Activated CD8-positive, alpha-beta T cell treated with anti-CD3 and anti-CD28 coated beads for 36 hours (primary cell): ENCODE measurements at regions of chr17 and their contacts with region 1.

Region 1: DNA sequence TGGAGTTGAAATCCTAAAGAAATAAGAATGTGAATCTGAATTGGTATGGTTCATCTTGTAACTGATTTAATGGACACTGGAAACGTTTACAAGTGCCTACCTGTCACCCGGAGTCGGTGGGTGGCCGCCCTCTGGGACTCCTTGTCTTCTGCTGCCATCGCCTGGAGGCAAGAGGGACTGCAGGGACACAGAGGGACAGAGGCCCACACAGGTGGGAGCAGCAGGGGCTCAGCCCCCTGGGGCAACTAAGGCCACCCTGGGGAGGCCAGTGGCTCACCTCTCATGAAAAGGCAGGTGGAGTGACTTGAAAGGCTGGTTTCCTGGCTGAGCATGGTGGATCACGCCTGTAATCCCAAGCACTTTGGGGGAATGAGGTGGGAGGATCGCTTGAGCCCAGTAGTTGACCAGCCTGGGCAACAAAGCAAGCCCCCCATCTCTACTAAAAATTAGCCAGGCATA is 23.2 kb downstream of the TMEM92 start:
- DNase-seq: peak; percentile 87
- ATAC-seq: peak; percentile 100
- H3K4me3 Mint-ChIP-seq: no peak overlapping the region
- H3K27ac Mint-ChIP-seq: no peak overlapping the region
- H3K4me1 Mint-ChIP-seq: no peaks in the 10 kb centered on the region
- H3K27me3 Mint-ChIP-seq: peaks cover 2% of the 10 kb centered on the region
- CTCF ChIP-seq: peak; percentile 98

Region 2: GRCh38 chr17:50213026-50214022 is 84.1 kb before region 1 on chr17:
- CTCF ChIA-PET with region 1: interaction called, 20 read pairs
- POLR2A ChIA-PET with region 1: interaction called, 3 read pairs
- intact Hi-C with region 1: no loop called
- DNase-seq: peak; percentile 88
- ATAC-seq: peak; percentile 99
- H3K4me3 Mint-ChIP-seq: no peak overlapping the region
- H3K27ac Mint-ChIP-seq: no peak overlapping the region
- H3K4me1 Mint-ChIP-seq: peaks cover 22% of the 10 kb centered on the region
- H3K27me3 Mint-ChIP-seq: peaks cover 25% of the 10 kb centered on the region
- CTCF ChIP-seq: no peak

Region 3: GRCh38 chr17:50269477-50270434 is 27.7 kb before region 1 on chr17:
- CTCF ChIA-PET with region 1: interaction called, 46 read pairs
- POLR2A ChIA-PET with region 1: interaction called, 3 read pairs
- intact Hi-C with region 1: no loop called
- DNase-seq: peak; percentile 88
- ATAC-seq: peak; percentile 94
- H3K4me3 Mint-ChIP-seq: no peak overlapping the region
- H3K27ac Mint-ChIP-seq: no peak overlapping the region
- H3K4me1 Mint-ChIP-seq: peaks cover 9% of the 10 kb centered on the region
- H3K27me3 Mint-ChIP-seq: peaks cover 11% of the 10 kb centered on the region
- CTCF ChIP-seq: peak; percentile 73

Region 4: DNA sequence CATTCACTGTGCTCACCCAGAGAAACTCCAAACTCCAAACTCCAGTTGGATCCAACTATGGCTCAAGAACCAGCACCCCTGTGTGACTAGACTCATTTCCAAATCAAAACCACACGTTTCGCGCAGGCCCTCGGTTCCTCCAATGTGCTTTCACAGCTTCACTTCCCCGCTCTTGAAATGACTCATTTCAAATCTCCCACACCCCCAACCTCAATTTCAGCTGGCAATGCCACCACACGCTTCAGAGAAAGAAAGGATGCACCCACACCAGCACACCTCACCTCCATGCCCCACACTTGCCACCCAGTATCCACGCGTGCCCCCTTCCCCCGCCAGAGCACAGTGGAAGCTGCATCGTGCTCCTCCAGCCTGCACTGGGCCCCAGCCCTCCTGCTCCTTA is 14.2 kb before region 1 on chr17:
- CTCF ChIA-PET with region 1: interaction called, 18 read pairs
- POLR2A ChIA-PET with region 1: interaction called, 4 read pairs
- intact Hi-C with region 1: no loop called
- DNase-seq: peak; percentile 61
- ATAC-seq: peak; percentile 65
- H3K4me3 Mint-ChIP-seq: no peak overlapping the region
- H3K27ac Mint-ChIP-seq: peak overlapping the region; percentile 21
- H3K4me1 Mint-ChIP-seq: peaks cover 11% of the 10 kb centered on the region
- H3K27me3 Mint-ChIP-seq: peaks cover 20% of the 10 kb centered on the region
- CTCF ChIP-seq: no peak